Head of caudate nucleus (tissue), 42 donors: ENCODE measurements at regions of chr12 and their contacts with region 1.

Region 1: GRCh38 chr12:67415473-67415872 is 146.3 kb downstream of the CAND1 start:
- DNase-seq: peak in 40 of 42 donors; percentile 7 to 86 (median 61)

Region 2: DNA sequence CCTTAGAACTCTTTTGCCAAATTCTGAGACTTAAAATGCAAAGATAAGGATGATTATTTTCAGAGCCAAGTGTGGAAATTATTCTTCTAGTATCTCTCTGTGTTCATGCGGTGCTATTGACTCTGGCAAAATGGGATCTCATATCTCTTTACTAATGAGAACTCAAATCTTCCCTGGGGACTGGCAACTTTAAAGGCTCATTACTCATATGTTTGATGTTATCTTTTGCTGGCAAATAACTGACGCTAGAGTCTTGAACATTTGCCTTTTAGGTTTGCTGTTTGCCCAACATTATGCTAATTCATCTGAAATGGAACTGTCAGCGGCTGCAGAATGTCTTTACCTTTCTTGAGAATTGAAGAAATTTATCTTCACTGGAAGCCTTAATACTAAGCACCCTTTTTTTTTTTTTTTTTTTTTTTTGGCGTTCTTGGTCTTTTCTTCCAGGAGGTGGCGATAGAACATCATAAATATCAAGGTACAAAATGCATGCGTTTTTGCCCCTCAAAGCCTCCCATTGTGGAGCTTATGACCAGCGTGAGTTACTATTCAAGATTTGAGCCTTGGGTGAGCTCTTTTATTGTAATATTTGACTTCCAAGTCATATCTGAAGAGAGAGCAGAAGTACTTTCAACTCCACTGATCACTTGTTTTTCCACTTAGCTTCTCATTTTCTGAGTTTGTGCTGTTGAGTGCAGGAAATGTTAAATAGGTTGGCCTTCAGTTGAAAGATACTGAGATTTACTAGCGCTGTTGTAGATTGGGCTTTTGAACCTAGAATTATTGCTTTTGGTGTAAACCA is 59.7 kb before region 1 on chr12:
- intact Hi-C with region 1: loop called (anchors 10 kb)
- DNase-seq: peak in 13 of 42 donors; percentile 8 to 53 (median 21)

Region 3: DNA sequence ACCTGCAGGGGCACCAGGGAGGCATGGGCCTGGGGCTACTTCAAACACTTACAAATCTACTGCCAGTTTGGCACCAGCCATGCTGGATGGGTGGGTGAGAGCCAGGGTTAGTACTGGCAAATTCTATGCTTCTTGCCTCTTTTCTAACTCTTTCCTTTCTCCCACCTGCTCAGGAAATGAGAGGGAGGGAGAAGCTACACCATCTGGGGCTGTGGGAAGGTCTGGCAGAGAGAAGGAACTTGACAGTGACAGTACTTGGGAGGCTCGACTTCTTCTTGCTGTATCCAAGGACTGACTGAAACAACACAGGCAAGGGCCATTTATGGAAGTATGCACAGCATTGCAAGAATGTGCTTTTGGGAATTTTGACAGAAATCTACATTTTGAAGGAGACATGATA is 83.5 kb after region 1 on chr12:
- intact Hi-C with region 1: no loop called
- DNase-seq: no peak

Region 4: GRCh38 chr12:68349921-68350606 is 934.6 kb after region 1 on chr12:
- intact Hi-C with region 1: no loop called
- DNase-seq: no peak